ENCODE measurements at regions of chr6 and their contacts with region 1.

Region 1: DNA sequence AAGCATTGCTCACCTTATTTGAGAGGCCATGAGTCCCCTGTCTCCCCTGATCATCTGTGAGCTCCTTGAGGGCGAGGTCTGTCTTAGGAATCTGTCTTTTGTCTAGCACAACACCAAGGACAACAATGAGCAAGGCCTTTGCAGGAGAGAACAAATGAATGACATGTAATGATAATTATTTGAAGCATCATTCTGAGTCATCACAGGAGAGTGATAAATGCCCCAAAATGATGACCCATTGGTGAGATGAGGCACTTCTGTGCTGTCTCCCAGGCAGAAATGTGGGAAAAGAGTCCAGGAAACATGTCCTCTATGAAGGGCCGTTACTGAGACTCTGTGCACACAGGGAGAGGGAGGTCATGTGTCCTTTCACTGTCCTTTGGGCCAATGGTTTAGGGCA is 105.2 kb upstream of the LRFN2 start:
- DNase-seq: no peak
- H3K4me3 ChIP-seq: no peak overlapping the region
- CTCF ChIP-seq: no peak

Region 2: GRCh38 chr6:40654828-40655227 is 37.5 kb before region 1 on chr6:
- in situ Hi-C with region 1: loop called (anchors 5 kb)
- DNase-seq: no peak
- H3K4me3 ChIP-seq: no peak overlapping the region
- CTCF ChIP-seq: no peak

Measured in astrocyte of the cerebellum (primary cell).